Dorsolateral prefrontal cortex (tissue), 120 donors: ENCODE measurements at regions of chr6 and their contacts with region 1.

Region 1: GRCh38 chr6:136719280-136720044 is 72.8 kb downstream of the MAP3K5 start:
- DNase-seq: no peak
- H3K4me3 ChIP-seq: no peak overlapping the region
- H3K27ac ChIP-seq: peak overlapping the region in 46 of 59 donors; percentile 7 to 81 (median 52)
- H3K27me3 ChIP-seq: no peaks in the 10 kb centered on the region
- CTCF ChIP-seq: no peak

Region 2: GRCh38 chr6:136784910-136785746 is 65.7 kb after region 1 on chr6:
- intact Hi-C with region 1: loop called (anchors 5 kb)
- DNase-seq: peak in 4 of 10 donors; percentile 31 to 42 (median 40)
- H3K4me3 ChIP-seq: peak overlapping the region in 36 of 59 donors; percentile 0 to 85 (median 28)
- H3K27ac ChIP-seq: peak overlapping the region in 42 of 59 donors; percentile 6 to 81 (median 44)
- H3K27me3 ChIP-seq: no peaks in the 10 kb centered on the region
- CTCF ChIP-seq: no peak